HCT116 (cell line): ENCODE measurements at regions of chr5 and their contacts with region 1.

Region 1: GRCh38 chr5:96934708-96935558 is 947 bp upstream of the LNPEP start:
- DNase-seq: peak; percentile 93
- ATAC-seq: peak; percentile 82
- H3K4me3 ChIP-seq: peak overlapping the region; percentile 70 to 83
- H3K27ac ChIP-seq: peak overlapping the region; percentile 87
- H3K4me1 ChIP-seq: peaks cover 16 to 34% of the 10 kb centered on the region in 2 experiments; a peak in 3 of 4 replicates
- H3K27me3 ChIP-seq: no peaks in the 10 kb centered on the region
- CTCF ChIP-seq: no peak
- POLR2A ChIP-seq: peak; percentile 51
- RAD21 ChIP-seq: no peak

Region 2: GRCh38 chr5:96807075-96807654 is 127.8 kb before region 1 on chr5:
- CTCF ChIA-PET with region 1: no interaction called
- POLR2A ChIA-PET with region 1: interaction called, 6 read pairs
- RAD21 ChIA-PET with region 1: no interaction called
- intact Hi-C with region 1: loop called (anchors 10 kb)
- DNase-seq: no peak
- ATAC-seq: peak; percentile 60
- H3K4me3 ChIP-seq: peak overlapping the region; percentile 68 to 73
- H3K27ac ChIP-seq: peak overlapping the region; percentile 94
- H3K4me1 ChIP-seq: peaks cover 5 to 13% of the 10 kb centered on the region in 2 experiments; a peak in 3 of 4 replicates
- H3K27me3 ChIP-seq: no peaks in the 10 kb centered on the region
- CTCF ChIP-seq: no peak
- POLR2A ChIP-seq: no peak
- RAD21 ChIP-seq: no peak

Region 3: DNA sequence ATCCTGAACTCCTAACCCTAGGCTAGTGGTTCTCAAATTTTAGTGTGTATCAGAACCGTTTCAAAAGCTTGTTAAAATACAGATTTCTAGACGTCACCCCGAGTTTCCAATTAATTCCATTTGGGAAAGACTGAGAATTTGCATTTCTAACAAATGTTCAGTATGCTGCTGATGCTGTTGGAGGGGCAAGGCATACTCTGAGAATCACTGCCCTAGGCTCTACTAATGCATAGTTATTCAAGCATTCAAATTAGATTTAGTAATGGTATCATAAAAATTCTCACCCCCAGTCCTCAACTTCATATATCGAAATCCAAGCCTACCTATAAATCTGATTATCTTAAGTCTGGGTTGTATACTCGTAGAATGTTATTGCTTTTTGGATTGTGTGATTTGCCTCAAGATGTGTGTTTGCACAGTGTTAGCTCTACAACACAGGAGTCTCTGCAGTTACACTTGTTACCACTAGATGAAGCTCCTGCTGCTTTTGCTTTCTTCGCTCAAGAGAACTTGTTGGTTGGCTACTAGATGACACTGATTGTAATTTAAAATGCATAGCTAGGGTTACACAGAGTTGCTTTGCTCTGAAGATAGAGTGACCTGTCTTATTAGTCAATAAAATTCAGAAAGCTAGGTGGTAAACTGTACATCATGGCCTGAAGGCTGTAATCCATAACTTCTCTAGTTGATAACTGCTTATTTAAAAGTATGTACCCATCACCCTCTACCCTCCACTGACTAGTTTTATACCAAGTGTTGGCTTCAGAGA is 66.1 kb before region 1 on chr5:
- CTCF ChIA-PET with region 1: interaction called, 3 read pairs
- POLR2A ChIA-PET with region 1: no interaction called
- RAD21 ChIA-PET with region 1: interaction called in 1 of 2 experiments, 5 read pairs
- intact Hi-C with region 1: loop called (anchors 1 kb)
- DNase-seq: peak; percentile 57
- ATAC-seq: peak; percentile 97
- H3K4me3 ChIP-seq: no peak overlapping the region
- H3K27ac ChIP-seq: no peak overlapping the region
- H3K4me1 ChIP-seq: no peaks in the 10 kb centered on the region
- H3K27me3 ChIP-seq: no peaks in the 10 kb centered on the region
- CTCF ChIP-seq: peak; percentile 76 to 95 (median 92)
- POLR2A ChIP-seq: no peak
- RAD21 ChIP-seq: peak; percentile 91

Region 4: GRCh38 chr5:97162045-97162444 is 227.1 kb after region 1 on chr5:
- CTCF ChIA-PET with region 1: no interaction called
- POLR2A ChIA-PET with region 1: no interaction called
- RAD21 ChIA-PET with region 1: no interaction called
- intact Hi-C with region 1: loop called (anchors 2 kb)
- DNase-seq: peak; percentile 79
- ATAC-seq: peak; percentile 77
- H3K4me3 ChIP-seq: no peak overlapping the region
- H3K27ac ChIP-seq: no peak overlapping the region
- H3K4me1 ChIP-seq: peaks cover 7 to 9% of the 10 kb centered on the region in 2 experiments; a peak in 3 of 4 replicates
- H3K27me3 ChIP-seq: no peaks in the 10 kb centered on the region
- CTCF ChIP-seq: peak; percentile 67 to 95 (median 81)
- POLR2A ChIP-seq: no peak
- RAD21 ChIP-seq: peak; percentile 85